ENCODE measurements at regions of chr6 and their contacts with region 1.

Region 1: GRCh38 chr6:142845624-142846458 is 99.1 kb downstream of the HIVEP2 start:
- DNase-seq: peak; percentile 86
- H3K4me3 ChIP-seq: peak overlapping the region; percentile 51; the same call in 1 of the 2 replicates
- H3K27ac ChIP-seq: peak overlapping the region; percentile 89
- H3K4me1 ChIP-seq: peaks cover 84% of the 10 kb centered on the region
- H3K27me3 ChIP-seq: no peaks in the 10 kb centered on the region
- CTCF ChIP-seq: no peak

Region 2: DNA sequence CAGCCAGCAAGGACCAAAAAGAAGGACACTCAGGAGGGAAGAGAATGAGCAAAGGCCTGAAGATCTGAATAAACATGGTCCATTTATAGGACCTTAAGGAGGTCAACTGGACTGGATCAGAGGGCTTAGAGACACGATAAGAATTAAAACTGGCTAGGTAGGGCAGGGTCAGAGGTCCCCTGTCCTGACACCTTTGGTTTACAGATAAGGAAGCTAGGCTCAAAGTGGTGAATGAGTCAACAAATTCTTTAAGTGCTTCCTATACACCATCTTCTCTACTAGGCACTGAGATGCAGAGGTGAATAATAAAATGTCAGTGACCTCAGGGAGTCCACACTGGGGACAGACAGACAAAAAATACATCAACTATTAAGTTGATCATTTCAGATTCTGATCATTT is 28.8 kb after region 1 on chr6:
- CTCF ChIA-PET with region 1: no interaction called
- POLR2A ChIA-PET with region 1: no interaction called
- intact Hi-C with region 1: loop called (anchors 1 kb)
- DNase-seq: peak; percentile 19 to 87
- H3K4me3 ChIP-seq: no peak overlapping the region
- H3K27ac ChIP-seq: peak overlapping the region; percentile 63
- H3K4me1 ChIP-seq: peaks cover 42% of the 10 kb centered on the region
- H3K27me3 ChIP-seq: no peaks in the 10 kb centered on the region
- CTCF ChIP-seq: no peak